Activated CD4-positive, alpha-beta T cell treated with anti-CD3 and anti-CD28 coated beads for 36 hours (primary cell): ENCODE measurements at regions of chr2 and their contacts with region 1.

Region 1: DNA sequence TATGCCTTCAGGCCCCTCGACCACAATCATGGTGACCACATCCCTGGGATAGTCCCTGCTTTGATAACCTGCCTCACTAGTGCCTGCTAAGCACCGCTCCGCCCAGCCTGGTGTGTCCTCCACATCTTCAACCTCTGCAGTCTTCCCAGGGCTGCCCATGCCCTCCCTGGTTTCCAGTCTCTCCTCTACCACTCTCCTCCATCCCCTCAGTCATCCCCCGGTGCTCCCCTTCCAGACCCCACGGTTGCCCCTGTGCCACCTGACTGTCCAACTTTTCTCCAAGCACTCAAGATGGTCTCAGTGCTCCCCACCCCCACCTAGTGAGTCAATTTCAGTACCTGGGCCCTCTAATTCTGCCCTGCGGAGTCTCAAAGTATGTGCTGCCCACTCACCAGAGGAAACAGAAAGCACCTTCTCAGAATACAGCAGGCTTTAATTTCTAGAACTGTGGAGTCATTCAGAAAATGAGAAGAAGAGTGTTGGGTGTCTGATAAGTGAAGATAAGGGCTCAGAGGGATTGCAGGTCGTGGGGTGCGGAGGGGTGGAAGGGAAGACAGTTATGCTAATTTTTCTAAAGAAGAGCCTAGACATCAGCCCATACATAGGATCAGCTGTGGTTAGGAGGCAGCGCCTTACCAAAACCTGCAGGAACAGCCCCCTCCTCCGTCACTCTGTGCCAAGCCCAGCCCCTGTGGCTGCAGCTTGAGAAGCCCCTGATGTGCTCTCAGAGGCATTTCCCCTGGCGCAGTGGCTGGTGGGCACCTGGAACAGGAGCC is 53.6 kb upstream of the CAB39 start:
- DNase-seq: peak; percentile 90
- ATAC-seq: peak; percentile 74
- H3K4me3 Mint-ChIP-seq: peak overlapping the region; percentile 73
- H3K27ac Mint-ChIP-seq: peak overlapping the region; percentile 97
- H3K4me1 Mint-ChIP-seq: peaks cover 92% of the 10 kb centered on the region
- H3K27me3 Mint-ChIP-seq: no peaks in the 10 kb centered on the region

Region 2: DNA sequence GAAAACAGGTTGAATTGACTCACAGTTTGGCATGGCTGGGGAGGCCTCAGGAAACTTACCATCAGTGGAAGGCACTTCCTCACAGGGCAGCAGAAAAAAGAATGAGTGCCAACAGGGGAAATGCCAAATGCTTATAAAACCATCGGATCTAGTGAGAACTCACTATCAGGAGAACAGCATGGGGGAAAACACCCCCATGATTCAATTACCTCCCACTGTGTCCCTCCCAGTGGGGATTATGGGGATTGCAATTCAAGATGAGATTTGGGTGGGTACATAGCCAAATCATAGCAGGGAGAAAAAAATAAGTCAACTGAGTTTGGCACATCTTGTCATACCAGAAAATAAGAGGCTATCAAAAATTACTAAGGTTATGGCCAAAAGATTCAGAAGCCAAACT is 833.6 kb before region 1 on chr2:
- CTCF ChIA-PET with region 1: no interaction called
- POLR2A ChIA-PET with region 1: no interaction called
- intact Hi-C with region 1: loop called in 1 of 2 experiments (anchors 1 kb)
- DNase-seq: no peak
- ATAC-seq: no peak
- H3K4me3 Mint-ChIP-seq: no peak overlapping the region
- H3K27ac Mint-ChIP-seq: no peak overlapping the region
- H3K4me1 Mint-ChIP-seq: peaks cover 21% of the 10 kb centered on the region
- H3K27me3 Mint-ChIP-seq: no peaks in the 10 kb centered on the region

Region 3: DNA sequence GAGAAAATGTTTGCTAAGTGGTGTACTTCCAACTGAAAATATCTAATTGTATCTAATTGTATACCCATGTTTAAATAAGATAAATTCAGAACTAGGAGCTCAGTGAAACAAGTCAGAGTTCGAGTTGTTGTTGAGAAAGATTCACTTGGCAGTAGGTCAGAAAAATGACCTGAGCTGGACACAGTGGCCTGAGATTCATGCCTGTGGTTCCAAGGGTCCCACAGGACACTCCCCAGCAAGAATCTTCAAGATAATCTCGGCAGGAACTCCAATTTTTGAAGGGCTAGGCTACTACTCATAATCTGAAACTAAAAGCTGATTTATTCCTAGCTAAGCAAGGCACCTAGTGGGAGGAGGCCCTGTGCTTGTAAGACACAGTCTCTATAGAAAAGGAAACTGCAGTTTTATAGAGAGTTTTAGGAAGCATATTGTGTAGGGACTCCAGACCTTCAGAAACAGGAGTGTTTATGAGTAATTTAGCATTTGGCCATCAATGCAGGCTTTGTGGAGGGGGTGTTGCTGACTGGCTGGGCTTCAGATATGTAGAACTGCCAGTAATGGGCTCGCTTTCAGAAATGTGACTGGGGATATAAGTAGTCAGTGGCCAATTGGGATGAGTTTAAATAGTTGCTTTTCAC is 390.3 kb before region 1 on chr2:
- CTCF ChIA-PET with region 1: no interaction called
- POLR2A ChIA-PET with region 1: no interaction called
- intact Hi-C with region 1: loop called in 1 of 2 experiments (anchors 5 kb)
- DNase-seq: peak; percentile 41
- ATAC-seq: peak; percentile 75
- H3K4me3 Mint-ChIP-seq: peak overlapping the region; percentile 11
- H3K27ac Mint-ChIP-seq: peak overlapping the region; percentile 74
- H3K4me1 Mint-ChIP-seq: peaks cover 43% of the 10 kb centered on the region
- H3K27me3 Mint-ChIP-seq: no peaks in the 10 kb centered on the region

Region 4: GRCh38 chr2:230411570-230412370 is 247.3 kb before region 1 on chr2:
- CTCF ChIA-PET with region 1: no interaction called
- POLR2A ChIA-PET with region 1: no interaction called
- intact Hi-C with region 1: loop called in 1 of 2 experiments (anchors 1 kb)
- DNase-seq: peak; percentile 76
- ATAC-seq: peak; percentile 66
- H3K4me3 Mint-ChIP-seq: peak overlapping the region; percentile 85
- H3K27ac Mint-ChIP-seq: peak overlapping the region; percentile 96
- H3K4me1 Mint-ChIP-seq: peaks cover 60% of the 10 kb centered on the region
- H3K27me3 Mint-ChIP-seq: no peaks in the 10 kb centered on the region

Region 5: DNA sequence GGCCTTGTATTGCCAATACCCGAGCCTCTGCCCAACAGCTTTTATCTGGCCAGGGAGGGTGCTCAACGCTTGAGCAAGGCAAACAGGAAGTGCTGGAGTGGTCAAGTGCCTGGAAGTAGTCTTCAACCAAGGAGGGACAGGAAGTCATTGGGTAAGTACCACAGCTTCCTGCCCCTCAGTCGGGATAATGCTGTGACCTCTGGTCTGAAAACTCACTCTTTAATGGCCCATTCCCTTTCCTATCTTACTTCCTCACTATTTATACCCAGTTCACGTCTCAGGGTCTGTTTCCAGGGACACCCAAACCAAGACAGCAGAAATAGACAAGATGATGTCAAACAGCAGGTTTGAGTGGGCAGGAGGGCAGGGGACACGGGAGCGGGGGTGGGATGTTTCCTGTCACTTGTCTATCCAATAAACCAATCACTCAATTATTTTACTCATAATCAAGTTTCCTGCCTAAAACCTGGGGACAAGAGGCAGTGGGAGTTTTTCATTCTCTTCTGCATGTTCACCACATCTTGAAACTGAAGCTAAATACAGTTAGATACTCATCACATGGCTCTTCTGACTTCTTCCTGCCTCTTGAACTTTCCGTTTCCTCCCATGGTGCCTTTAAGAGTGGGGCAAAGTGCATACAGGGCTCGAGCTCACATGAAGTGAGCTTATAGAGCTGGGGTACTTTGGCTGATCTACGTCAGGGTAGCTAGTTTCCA is 15.3 kb before region 1 on chr2:
- CTCF ChIA-PET with region 1: interaction called, 7 read pairs
- POLR2A ChIA-PET with region 1: interaction called, 13 read pairs
- intact Hi-C with region 1: loop called (anchors 1 kb)
- DNase-seq: peak; percentile 84
- ATAC-seq: peak; percentile 94
- H3K4me3 Mint-ChIP-seq: peak overlapping the region; percentile 24
- H3K27ac Mint-ChIP-seq: peak overlapping the region; percentile 97
- H3K4me1 Mint-ChIP-seq: peaks cover 39% of the 10 kb centered on the region
- H3K27me3 Mint-ChIP-seq: no peaks in the 10 kb centered on the region

Region 6: DNA sequence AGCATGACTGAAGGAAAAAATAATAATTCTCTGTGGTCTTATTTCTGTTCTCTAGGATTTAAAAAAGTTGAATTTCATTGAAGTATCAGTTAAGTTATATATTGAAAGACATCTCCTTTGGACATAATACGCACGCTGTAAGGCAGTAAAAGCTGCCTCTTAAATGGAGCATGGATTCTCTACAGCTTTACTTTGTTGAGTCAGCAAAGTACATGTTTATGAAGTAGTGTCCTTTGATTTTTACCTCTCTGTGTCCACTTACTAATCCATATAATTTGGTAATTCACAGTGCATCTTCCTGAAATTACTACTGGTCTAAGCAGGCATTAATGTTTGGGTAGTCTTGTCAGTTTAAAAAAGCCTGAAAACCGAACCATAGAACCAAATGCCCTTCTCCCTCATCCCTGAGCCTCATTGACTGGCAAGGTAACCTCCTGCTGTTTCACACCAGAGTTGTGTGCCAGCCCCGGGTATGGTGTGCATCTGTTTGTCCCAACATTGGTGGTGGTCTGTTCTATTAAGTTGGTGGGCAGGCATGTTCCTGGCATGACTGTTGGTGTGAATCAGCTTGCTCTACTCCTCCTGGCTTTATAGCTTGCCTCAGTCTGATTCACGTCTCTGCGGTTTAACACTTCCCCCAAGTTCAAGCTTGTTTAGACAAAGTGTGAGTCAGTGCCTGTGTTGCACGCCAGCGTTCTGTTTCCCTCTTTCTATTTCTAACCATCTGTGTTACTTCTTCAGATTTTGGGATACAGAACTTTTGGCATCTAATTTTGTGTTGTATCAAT is 134.7 kb after region 1 on chr2:
- CTCF ChIA-PET with region 1: interaction called, 9 read pairs
- POLR2A ChIA-PET with region 1: interaction called, 8 read pairs
- intact Hi-C with region 1: loop called (anchors 1 to 2 kb)
- DNase-seq: peak; percentile 83
- ATAC-seq: peak; percentile 92
- H3K4me3 Mint-ChIP-seq: peak overlapping the region; percentile 66
- H3K27ac Mint-ChIP-seq: no peak overlapping the region
- H3K4me1 Mint-ChIP-seq: peaks cover 59% of the 10 kb centered on the region
- H3K27me3 Mint-ChIP-seq: no peaks in the 10 kb centered on the region